ENCODE measurements at regions of chr1 and their contacts with region 1.

Region 1: GRCh38 chr1:156641761-156642264 is at the start of gene BCAN:
- DNase-seq: no peak
- H3K4me3 Mint-ChIP-seq: peak within 1 kb of the TSS; percentile 3
- H3K27ac Mint-ChIP-seq: no peak within 1 kb of the TSS
- H3K4me1 Mint-ChIP-seq: peaks cover 33% of the 10 kb centered on the region
- H3K27me3 Mint-ChIP-seq: peaks cover 77% of the 10 kb centered on the region
- total RNA-seq, gene BCAN: not detected

Region 2: DNA sequence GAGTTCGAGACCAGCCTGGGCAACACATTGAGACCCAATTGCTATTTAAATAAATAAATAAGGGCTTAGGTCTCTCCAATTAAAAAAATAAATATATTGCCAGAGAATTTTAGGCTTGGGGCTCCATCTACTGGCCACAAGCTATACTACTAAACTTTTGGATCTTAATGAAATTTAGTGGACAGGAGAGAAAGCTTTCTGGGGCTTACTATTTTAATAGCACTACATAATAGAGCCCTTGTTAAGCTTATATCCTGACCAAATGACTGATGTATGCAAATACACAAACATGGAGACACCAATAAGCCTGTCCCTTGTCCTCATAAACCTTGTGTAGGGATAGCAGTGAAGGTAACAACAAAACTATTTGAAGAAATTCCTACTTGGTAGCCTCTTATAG is 322.1 kb before region 1 on chr1:
- CTCF ChIA-PET with region 1: no interaction called
- POLR2A ChIA-PET with region 1: no interaction called
- DNase-seq: peak; percentile 43
- H3K4me3 Mint-ChIP-seq: no peak overlapping the region
- H3K27ac Mint-ChIP-seq: no peak overlapping the region
- H3K4me1 Mint-ChIP-seq: no peaks in the 10 kb centered on the region
- H3K27me3 Mint-ChIP-seq: no peaks in the 10 kb centered on the region

Region 3: DNA sequence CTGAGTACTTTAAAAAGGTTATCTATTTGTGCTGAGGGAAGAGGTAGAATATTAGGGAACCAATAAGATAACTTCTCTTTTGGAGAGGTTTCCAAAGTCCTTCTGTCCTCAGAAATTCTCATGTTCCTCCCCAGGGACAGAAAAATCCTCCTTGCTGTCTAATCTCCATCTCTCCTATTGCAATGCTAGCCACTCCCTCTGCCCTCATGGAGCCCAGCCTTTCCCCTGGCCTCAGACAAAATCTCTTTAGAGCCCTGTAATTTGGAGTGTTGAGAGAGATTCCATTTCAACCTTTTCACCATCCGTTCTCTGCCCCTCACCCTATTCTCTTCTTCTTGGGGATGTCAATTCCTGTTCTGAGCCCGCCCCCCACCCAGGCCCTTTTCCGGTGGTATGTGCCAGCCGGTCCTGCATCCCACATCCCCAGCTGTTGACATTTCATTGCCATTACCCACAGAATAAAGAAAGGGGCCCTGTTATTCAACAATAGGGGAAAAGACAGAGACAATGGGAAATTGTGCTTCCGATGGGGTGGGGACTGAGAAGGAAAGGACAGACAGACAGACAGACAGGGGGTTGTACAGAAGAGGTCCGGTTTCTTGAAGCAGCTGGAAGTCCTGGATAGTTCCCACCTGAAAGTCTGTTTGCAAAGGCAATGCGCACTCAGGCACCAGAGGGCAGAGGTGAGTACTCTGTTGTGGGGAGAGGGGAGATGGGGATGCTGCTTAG is 22.8 kb before region 1 on chr1 and contains the start of gene HAPLN2:
- CTCF ChIA-PET with region 1: interaction called, 10 read pairs
- POLR2A ChIA-PET with region 1: no interaction called
- DNase-seq: peak; percentile 34
- H3K4me3 Mint-ChIP-seq: no peak within 1 kb of the TSS
- H3K27ac Mint-ChIP-seq: no peak within 1 kb of the TSS
- H3K4me1 Mint-ChIP-seq: peaks cover under 1% of the 10 kb centered on the region
- H3K27me3 Mint-ChIP-seq: peaks cover 71% of the 10 kb centered on the region
- total RNA-seq, gene HAPLN2: 0.62 TPM in 1 of 2 experiments, not detected in the other

Region 4: DNA sequence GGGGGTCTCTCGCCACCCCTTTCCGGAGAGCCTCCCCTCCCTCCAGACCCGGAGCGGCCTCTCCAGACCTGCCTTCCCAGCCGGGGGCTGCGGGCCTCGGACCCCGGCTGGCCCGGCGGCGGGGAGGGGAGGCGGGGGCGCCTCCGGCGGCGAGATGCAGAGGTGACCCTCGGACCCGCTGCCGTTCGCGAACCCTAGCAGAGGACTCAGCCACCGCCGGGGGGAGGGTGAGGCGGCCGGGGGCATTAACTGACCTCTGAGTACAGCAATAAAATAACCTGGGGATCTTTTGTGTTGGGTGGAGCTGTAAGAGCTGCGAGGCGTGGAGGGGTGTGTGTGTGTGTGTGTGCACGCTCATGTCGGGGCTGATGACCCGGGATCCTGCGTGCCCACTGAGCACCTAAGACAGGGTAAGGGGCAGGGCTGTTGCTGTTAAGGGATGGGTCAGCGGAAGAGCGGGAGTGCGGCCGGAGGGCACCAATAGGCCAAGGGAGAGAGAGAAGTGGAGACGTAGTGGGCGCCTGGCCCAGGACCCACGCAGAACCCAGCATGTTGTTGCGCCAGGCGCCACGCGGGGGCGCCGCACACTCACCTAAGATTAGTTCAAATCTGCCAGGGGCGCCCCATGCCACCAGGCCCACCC is 16.3 kb before region 1 on chr1:
- CTCF ChIA-PET with region 1: interaction called, 12 read pairs
- POLR2A ChIA-PET with region 1: no interaction called
- DNase-seq: peak; percentile 71
- H3K4me3 Mint-ChIP-seq: peak overlapping the region; percentile 55
- H3K27ac Mint-ChIP-seq: peak overlapping the region; percentile 21
- H3K4me1 Mint-ChIP-seq: peaks cover 12% of the 10 kb centered on the region
- H3K27me3 Mint-ChIP-seq: peaks cover 66% of the 10 kb centered on the region